ENCODE measurements at regions of chr19 and their contacts with region 1.

Region 1: GRCh38 chr19:7829561-7830271 is at the start of gene EVI5L:
- DNase-seq: peak; percentile 100
- H3K4me3 Mint-ChIP-seq: peak within 1 kb of the TSS; percentile 88
- H3K27ac Mint-ChIP-seq: peak within 1 kb of the TSS; percentile 83
- H3K4me1 Mint-ChIP-seq: peaks cover 17% of the 10 kb centered on the region
- H3K27me3 Mint-ChIP-seq: peaks cover 10% of the 10 kb centered on the region
- total RNA-seq, gene EVI5L: 4.3 and 5.2 TPM in 2 replicates

Region 2: GRCh38 chr19:7868676-7869452 is 39.1 kb after region 1 on chr19:
- intact Hi-C with region 1: loop called (anchors 1 kb)
- DNase-seq: peak; percentile 95
- H3K4me3 Mint-ChIP-seq: peak overlapping the region; percentile 80
- H3K27ac Mint-ChIP-seq: peak overlapping the region; percentile 36
- H3K4me1 Mint-ChIP-seq: peaks cover 30% of the 10 kb centered on the region
- H3K27me3 Mint-ChIP-seq: peaks cover 38% of the 10 kb centered on the region

Region 3: DNA sequence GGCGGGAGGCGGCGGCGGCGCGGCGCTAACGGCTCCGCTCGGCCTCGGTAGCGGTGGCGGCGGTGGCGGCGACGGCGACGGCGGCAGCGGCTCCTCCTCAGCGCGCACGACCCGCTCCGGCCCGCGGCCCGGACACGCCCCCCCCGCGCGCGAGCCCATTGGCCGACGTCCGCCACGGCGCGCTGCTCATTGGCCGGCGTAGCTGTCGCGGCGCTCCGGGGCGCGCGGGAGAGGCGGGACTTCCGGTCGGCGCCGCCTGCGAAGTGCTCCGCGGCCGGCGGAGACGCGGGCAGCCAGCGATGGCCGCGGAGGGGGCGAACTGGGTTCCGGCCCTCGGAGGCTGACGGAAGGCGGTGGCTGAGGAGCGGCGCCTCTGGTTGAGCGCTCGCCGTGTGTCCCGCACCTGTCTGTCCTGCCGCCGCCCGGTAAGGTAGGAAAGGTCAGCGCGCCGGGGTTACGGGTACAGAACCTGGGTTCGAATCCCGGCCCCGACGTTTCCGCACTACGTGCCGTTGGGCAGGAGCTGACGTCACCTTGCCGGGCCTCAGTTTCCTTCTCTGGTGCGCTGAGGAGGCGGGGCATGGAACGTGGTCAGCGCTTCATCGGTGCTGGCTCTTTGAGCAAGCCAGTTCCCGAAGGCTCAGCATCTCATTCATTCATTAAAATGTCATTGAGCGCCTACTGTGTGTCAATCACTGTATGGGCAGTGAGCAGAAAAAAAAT is 176.0 kb after region 1 on chr19 and contains the start of gene ELAVL1:
- intact Hi-C with region 1: loop called (anchors 5 kb)
- DNase-seq: peak; percentile 98
- H3K4me3 Mint-ChIP-seq: peak within 1 kb of the TSS; percentile 96
- H3K27ac Mint-ChIP-seq: peak within 1 kb of the TSS; percentile 89
- H3K4me1 Mint-ChIP-seq: peaks cover 30% of the 10 kb centered on the region
- H3K27me3 Mint-ChIP-seq: no peaks in the 10 kb centered on the region
- total RNA-seq, gene ELAVL1: 191 and 193 TPM in 2 replicates

Measured in activated CD4-positive, alpha-beta T cell treated with anti-CD3 and anti-CD28 coated beads, Interleukin-2, amount 10 ng/mL, durations not matched to agents 24 days and 14 days (primary cell).